ENCODE measurements at regions of chr10 and their contacts with region 1.

Region 1: GRCh38 chr10:88565072-88565471 is 18.0 kb downstream of the RNLS start:
- DNase-seq: peak; percentile 24
- CTCF ChIP-seq: peak; percentile 40

Region 2: DNA sequence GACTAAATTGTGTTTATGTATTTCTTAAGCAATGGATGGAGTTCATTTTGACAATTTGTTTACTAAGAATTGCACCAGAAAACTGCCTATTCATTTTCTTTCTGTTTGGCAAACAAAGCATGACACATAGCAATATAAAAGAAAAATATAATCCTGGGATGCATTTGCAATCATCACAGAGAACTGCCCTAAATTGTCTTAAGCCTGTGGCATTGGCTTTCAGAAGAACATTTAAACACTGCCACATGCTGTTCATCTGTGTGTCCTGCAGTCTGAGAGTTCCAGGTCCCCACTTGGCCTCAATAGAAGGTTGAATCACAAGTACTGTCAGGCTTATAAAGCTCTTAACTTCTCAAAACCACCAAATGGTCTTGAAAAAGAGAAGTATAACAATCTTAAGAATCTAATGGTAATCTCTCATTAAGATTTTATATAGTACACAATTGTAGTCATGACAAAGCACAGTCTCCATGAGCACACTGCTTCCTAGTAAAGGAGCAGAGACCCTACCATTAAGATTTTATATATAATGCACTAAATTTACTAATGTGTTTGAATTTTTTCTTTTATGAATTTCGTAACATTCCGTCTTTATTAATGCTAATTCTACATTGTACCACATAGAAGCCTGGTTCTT is 11.8 kb before region 1 on chr10:
- CTCF ChIA-PET with region 1: interaction called, 15 read pairs
- POLR2A ChIA-PET with region 1: no interaction called
- DNase-seq: peak; percentile 60
- CTCF ChIP-seq: peak; percentile 91

Region 3: GRCh38 chr10:88582806-88583583 is 17.9 kb after region 1 on chr10 and contains the start of gene RNLS:
- CTCF ChIA-PET with region 1: interaction called, 80 read pairs
- POLR2A ChIA-PET with region 1: no interaction called
- DNase-seq: peak; percentile 71
- CTCF ChIP-seq: peak; percentile 94